Caco-2 (cell line): ENCODE measurements at regions of chr1 and their contacts with region 1.

Region 1: GRCh38 chr1:200620273-200621131 is at the start of gene KIF14:
- DNase-seq: peak; percentile 94 to 95
- H3K4me3 ChIP-seq: peak within 1 kb of the TSS; percentile 85
- H3K4me3 Mint-ChIP-seq: peak within 1 kb of the TSS; percentile 94
- H3K27ac Mint-ChIP-seq: peak within 1 kb of the TSS; percentile 92
- H3K4me1 ChIP-seq: 0 out of 2 replicates have a peak, but pooled peaks cover 3% of the 10 kb centered on the region
- H3K4me1 Mint-ChIP-seq: peaks cover 7% of the 10 kb centered on the region
- H3K27me3 ChIP-seq: no peaks in the 10 kb centered on the region
- H3K27me3 Mint-ChIP-seq: no peaks in the 10 kb centered on the region
- CTCF ChIP-seq: no peak
- total RNA-seq, gene KIF14: 11.6 and 12.3 TPM in 2 replicates

Region 2: GRCh38 chr1:200550367-200550766 is 70.1 kb before region 1 on chr1:
- CTCF ChIA-PET with region 1: no interaction called
- POLR2A ChIA-PET with region 1: no interaction called
- intact Hi-C with region 1: no loop called
- DNase-seq: no peak
- H3K4me3 ChIP-seq: no peak overlapping the region
- H3K4me3 Mint-ChIP-seq: no peak overlapping the region
- H3K27ac Mint-ChIP-seq: no peak overlapping the region
- H3K4me1 ChIP-seq: no peaks in the 10 kb centered on the region
- H3K4me1 Mint-ChIP-seq: no peaks in the 10 kb centered on the region
- H3K27me3 ChIP-seq: no peaks in the 10 kb centered on the region
- H3K27me3 Mint-ChIP-seq: no peaks in the 10 kb centered on the region
- CTCF ChIP-seq: no peak

Region 3: DNA sequence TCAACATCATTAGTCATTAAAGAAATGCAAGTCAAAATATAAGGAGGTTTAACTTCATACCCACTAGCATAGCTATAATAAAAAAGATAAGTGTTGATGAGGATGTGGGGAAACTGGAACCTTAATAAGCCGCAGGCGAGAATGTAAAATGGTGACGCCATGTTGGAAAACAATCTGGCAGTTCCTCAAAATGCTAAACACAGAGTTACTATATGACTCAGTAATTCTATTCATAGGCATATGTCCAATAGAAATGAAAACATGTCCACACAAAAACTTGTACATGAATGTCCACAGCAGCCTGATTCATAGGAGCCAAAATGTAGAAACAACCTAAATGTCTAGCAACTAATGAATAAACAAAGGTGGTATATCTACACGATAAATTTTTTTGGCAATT is 26.0 kb after region 1 on chr1:
- CTCF ChIA-PET with region 1: no interaction called
- POLR2A ChIA-PET with region 1: no interaction called
- intact Hi-C with region 1: no loop called
- DNase-seq: no peak
- H3K4me3 ChIP-seq: no peak overlapping the region
- H3K4me3 Mint-ChIP-seq: no peak overlapping the region
- H3K27ac Mint-ChIP-seq: no peak overlapping the region
- H3K4me1 ChIP-seq: no peaks in the 10 kb centered on the region
- H3K4me1 Mint-ChIP-seq: no peaks in the 10 kb centered on the region
- H3K27me3 ChIP-seq: no peaks in the 10 kb centered on the region
- H3K27me3 Mint-ChIP-seq: no peaks in the 10 kb centered on the region
- CTCF ChIP-seq: no peak

Region 4: DNA sequence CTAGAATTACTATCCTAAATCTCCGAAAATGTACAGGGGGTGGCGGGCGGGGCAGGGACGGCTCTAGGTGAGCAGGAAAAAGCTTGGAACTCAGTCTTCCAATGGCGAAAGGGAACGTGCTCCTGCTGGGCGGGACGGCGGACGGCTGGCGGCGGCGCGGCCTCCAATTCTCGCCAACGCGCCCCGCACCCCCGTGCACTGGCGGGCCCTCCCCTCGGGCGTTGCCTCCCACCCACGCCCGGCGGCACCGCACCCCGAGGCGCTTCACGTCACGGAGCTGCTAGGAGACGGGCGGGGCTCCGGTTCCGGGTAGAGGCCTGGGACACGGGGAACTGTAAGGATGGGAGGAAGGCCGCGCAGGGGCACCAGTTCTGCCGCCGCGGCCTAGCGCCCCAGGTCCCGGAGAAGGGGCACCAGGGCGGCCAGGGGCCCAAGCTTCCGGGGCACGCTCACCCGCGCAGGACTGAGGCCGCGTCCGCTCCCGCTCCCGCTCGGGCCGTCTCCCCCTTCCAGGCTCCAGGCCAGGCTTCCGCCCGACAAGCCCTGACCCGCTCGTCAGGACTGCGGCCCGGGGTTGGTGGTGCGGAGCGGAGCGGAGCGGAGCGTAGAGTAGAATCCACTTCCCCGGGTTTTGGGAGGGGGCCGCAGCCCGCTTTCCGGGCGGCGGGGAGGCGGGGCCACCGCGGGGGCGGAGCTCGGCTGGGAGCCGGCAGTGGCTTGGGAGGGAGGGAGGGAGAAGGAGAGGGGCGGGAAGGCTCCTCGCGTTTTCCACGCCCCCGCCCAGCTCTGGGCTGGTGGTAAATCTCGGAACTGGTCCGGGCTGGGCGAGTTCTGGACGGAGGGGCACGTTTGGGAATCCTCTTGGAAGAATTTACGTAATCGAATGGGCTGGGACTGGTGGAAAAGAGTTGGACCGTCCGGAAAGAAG is 49.1 kb after region 1 on chr1 and contains the start of gene DDX59:
- CTCF ChIA-PET with region 1: interaction called, 16 read pairs
- POLR2A ChIA-PET with region 1: interaction called, 16 read pairs
- intact Hi-C with region 1: loop called (anchors 2 kb)
- DNase-seq: peak; percentile 97
- H3K4me3 ChIP-seq: peak within 1 kb of the TSS; percentile 97
- H3K4me3 Mint-ChIP-seq: peak within 1 kb of the TSS; percentile 99
- H3K27ac Mint-ChIP-seq: peak within 1 kb of the TSS; percentile 99
- H3K4me1 ChIP-seq: peaks cover 16% of the 10 kb centered on the region
- H3K4me1 Mint-ChIP-seq: peaks cover 10% of the 10 kb centered on the region
- H3K27me3 ChIP-seq: no peaks in the 10 kb centered on the region
- H3K27me3 Mint-ChIP-seq: no peaks in the 10 kb centered on the region
- CTCF ChIP-seq: no peak
- total RNA-seq, gene DDX59: 13.5 and 16.3 TPM in 2 replicates

Region 5: DNA sequence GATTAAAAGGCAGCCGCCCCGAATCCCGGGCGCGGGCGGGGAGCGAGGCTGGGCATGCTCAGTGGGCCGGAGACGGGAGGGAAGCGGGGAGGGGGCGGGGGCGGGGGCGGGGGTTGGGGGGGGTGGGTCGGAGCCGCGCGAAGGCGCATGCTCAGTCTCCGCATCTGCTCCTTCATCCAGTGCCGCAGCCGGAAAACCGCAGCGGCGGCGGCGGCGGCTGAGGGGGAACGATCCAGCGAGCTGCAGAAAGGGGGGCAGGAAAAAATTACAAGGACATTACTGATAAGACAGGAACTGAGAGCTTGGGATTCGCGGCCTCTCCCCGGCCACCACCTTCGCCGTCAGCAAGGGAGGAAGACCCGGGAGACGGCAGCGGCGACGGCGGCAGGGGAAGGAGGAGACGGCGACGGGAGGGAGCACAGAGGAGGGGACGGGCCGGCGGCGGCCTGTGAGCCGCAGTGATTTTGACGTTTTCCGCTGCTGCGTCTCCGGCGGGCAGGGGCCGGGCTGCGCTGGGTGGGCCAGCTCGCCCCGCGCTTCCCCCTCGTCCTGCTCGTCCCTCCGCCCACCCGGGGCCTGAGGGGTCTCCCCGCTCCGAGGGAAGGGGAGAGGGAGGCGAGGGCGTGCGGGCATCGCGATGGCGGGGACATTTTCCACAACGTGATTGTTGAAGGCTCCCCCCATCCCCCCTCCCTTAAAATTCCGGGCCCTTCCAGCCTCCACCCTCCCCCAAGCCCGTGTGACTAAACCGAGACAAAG is 118.4 kb after region 1 on chr1 and contains the start of gene CAMSAP2:
- CTCF ChIA-PET with region 1: interaction called, 12 read pairs
- POLR2A ChIA-PET with region 1: interaction called, 6 read pairs
- intact Hi-C with region 1: loop called (anchors 5 kb)
- DNase-seq: peak; percentile 85 to 87
- H3K4me3 ChIP-seq: peak within 1 kb of the TSS; percentile 70
- H3K4me3 Mint-ChIP-seq: peak within 1 kb of the TSS; percentile 93
- H3K27ac Mint-ChIP-seq: peak within 1 kb of the TSS; percentile 95
- H3K4me1 ChIP-seq: peaks cover 11% of the 10 kb centered on the region
- H3K4me1 Mint-ChIP-seq: peaks cover 12% of the 10 kb centered on the region
- H3K27me3 ChIP-seq: no peaks in the 10 kb centered on the region
- H3K27me3 Mint-ChIP-seq: no peaks in the 10 kb centered on the region
- CTCF ChIP-seq: no peak
- total RNA-seq, gene CAMSAP2: 23.4 and 24.4 TPM in 2 replicates

Region 6: GRCh38 chr1:200802865-200803512 is 182.5 kb after region 1 on chr1:
- CTCF ChIA-PET with region 1: interaction called, 18 read pairs
- POLR2A ChIA-PET with region 1: no interaction called
- intact Hi-C with region 1: loop called (anchors 1 kb)
- DNase-seq: peak; percentile 86
- H3K4me3 ChIP-seq: no peak overlapping the region
- H3K4me3 Mint-ChIP-seq: no peak overlapping the region
- H3K27ac Mint-ChIP-seq: no peak overlapping the region
- H3K4me1 ChIP-seq: peaks cover 6% of the 10 kb centered on the region; the same call in 1 of the 2 replicates
- H3K4me1 Mint-ChIP-seq: peaks cover 8% of the 10 kb centered on the region
- H3K27me3 ChIP-seq: no peaks in the 10 kb centered on the region
- H3K27me3 Mint-ChIP-seq: no peaks in the 10 kb centered on the region
- CTCF ChIP-seq: peak; percentile 92 to 97

Region 7: DNA sequence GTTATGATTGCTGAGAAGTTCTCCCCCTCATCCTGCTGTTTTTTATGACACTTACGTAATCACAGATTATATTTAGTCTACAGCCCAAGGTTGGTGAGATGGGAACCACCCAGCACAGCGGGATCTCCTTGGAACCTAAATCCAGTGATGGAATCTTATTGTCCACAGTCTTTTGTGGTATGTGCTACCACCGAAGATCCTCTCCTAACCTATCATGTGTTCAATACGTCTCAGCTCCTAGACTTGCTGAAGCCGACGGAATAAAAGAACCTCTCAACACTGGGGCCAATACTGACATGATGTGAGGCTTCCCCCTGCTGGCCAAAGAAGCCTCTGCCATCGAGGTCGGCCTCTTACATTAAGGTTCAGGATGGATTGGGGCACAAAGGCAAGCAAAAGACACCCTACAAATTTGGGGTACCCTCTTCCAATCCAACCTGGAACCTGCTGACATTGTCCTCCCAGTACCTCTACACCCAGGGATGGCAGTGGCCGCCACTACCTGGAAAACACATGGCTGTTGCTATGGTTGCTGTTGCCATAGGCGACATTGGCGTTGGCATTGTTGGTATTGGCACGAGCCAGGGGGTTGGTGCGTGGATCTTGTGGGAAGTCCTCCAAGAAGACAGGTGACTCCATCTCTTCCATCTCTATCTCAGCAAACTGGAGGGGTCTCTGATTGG is 422.4 kb after region 1 on chr1:
- CTCF ChIA-PET with region 1: no interaction called
- POLR2A ChIA-PET with region 1: no interaction called
- intact Hi-C with region 1: loop called (anchors 5 kb)
- DNase-seq: peak; percentile 67 to 73
- H3K4me3 ChIP-seq: no peak overlapping the region
- H3K4me3 Mint-ChIP-seq: no peak overlapping the region
- H3K27ac Mint-ChIP-seq: no peak overlapping the region
- H3K4me1 ChIP-seq: no peaks in the 10 kb centered on the region
- H3K4me1 Mint-ChIP-seq: no peaks in the 10 kb centered on the region
- H3K27me3 ChIP-seq: no peaks in the 10 kb centered on the region
- H3K27me3 Mint-ChIP-seq: peaks cover 2% of the 10 kb centered on the region
- CTCF ChIP-seq: peak; percentile 83 to 85